ENCODE measurements at regions of chr12 and their contacts with region 1.

Region 1: DNA sequence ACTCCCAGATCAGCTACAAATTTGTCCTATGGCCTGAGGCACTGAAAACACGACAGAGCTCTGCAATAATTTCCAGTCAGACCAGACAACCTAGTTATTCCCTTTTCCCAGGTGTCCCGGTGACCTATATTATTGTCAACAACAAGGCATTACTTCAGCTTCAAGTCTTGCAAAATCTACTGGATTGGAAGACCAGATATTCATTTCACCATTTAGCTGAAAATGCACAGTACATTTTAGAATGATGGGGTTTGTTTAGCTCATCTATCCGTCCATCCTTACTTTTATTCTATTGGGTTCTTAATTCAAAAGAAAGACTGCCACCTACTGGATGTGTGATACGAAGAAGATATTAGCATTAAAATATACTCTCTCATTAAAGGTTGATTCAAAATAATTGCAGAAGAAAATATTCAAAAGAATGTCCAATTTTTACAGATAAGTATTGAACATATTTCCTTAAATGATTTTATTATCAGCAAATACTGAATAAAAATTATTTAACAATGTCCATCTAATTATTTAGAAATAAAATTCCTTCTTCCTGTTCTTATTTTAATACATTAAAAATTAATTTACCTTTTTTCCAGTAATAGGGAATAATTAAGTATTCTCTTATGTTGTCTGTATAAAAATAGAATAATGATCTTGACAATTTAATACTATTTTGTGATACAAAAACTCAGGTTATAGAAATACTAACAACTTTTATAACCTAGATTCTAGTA is 244.9 kb upstream of the LRIG3 start:
- DNase-seq: peak; percentile 41
- H3K4me3 ChIP-seq: no peak overlapping the region
- H3K27ac ChIP-seq: no peak overlapping the region
- H3K4me1 ChIP-seq: no peaks in the 10 kb centered on the region
- H3K27me3 ChIP-seq: no peaks in the 10 kb centered on the region
- CTCF ChIP-seq: peak; percentile 17 to 30
- POLR2A ChIP-seq: no peak

Region 2: DNA sequence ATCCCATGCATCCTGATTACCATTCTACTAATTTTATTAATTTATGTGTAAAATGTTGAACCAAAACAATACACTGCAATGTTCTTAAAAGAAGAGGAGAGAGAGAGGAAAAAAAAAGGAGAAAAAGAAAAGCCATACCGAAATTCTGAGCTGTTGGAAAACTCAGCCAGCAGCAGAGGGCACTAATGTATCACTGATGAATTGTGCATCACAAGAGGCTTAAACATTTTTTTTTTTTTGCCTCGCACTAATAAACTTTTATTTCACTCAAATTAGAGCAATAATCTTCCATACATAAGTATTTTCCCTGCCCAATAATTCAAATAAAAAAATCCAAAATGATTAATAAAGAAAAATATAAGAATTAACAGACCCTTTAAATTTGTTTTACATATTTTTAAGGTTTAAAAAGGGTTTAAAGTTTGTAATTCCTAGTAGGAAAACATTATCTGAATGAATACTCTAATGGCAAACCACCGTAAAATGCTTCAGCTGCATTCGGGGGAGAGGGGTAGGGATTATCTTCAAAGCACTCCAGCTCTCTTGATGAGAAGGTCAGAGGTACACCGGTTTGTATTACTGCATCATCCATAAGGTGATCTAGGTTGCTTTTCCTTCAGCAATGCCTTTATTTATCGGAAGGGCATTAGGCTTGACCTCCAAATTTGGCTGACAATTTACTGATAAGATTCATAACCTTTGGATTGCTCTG is 1181.9 kb before region 1 on chr12:
- CTCF ChIA-PET with region 1: interaction called, 49 read pairs
- POLR2A ChIA-PET with region 1: no interaction called
- dilution Hi-C with region 1: no loop called
- intact Hi-C with region 1: no loop called
- DNase-seq: peak; percentile 72
- H3K4me3 ChIP-seq: no peak overlapping the region
- H3K27ac ChIP-seq: no peak overlapping the region
- H3K4me1 ChIP-seq: no peaks in the 10 kb centered on the region
- H3K27me3 ChIP-seq: peaks cover 0 to 3% of the 10 kb centered on the region in 2 experiments
- CTCF ChIP-seq: peak; percentile 25 to 55
- POLR2A ChIP-seq: no peak

Region 3: GRCh38 chr12:59113831-59114615 is 51.1 kb before region 1 on chr12:
- CTCF ChIA-PET with region 1: interaction called, 86 read pairs
- POLR2A ChIA-PET with region 1: no interaction called
- dilution Hi-C with region 1: no loop called
- intact Hi-C with region 1: loop called (anchors 1 kb)
- DNase-seq: peak; percentile 92
- H3K4me3 ChIP-seq: no peak overlapping the region
- H3K27ac ChIP-seq: no peak overlapping the region
- H3K4me1 ChIP-seq: peaks cover 4% of the 10 kb centered on the region
- H3K27me3 ChIP-seq: no peaks in the 10 kb centered on the region
- CTCF ChIP-seq: peak; percentile 82 to 94
- POLR2A ChIP-seq: no peak

Region 4: GRCh38 chr12:59142175-59142790 is 22.9 kb before region 1 on chr12:
- CTCF ChIA-PET with region 1: interaction called, 14 read pairs
- POLR2A ChIA-PET with region 1: no interaction called
- dilution Hi-C with region 1: no loop called
- intact Hi-C with region 1: no loop called
- DNase-seq: no peak
- H3K4me3 ChIP-seq: no peak overlapping the region
- H3K27ac ChIP-seq: no peak overlapping the region
- H3K4me1 ChIP-seq: no peaks in the 10 kb centered on the region
- H3K27me3 ChIP-seq: no peaks in the 10 kb centered on the region
- CTCF ChIP-seq: no peak
- POLR2A ChIP-seq: no peak

Measured in endothelial cell of umbilical vein (primary cell).